ENCODE measurements at regions of chr19 and their contacts with region 1.

Region 1: GRCh38 chr19:16185123-16185767 is at the start of gene FAM32A:
- DNase-seq: peak; percentile 98
- ATAC-seq: peak; percentile 97
- H3K4me3 ChIP-seq: peak within 1 kb of the TSS; percentile 84 to 96 (median 95)
- H3K27ac ChIP-seq: peak within 1 kb of the TSS; percentile 73
- H3K4me1 ChIP-seq: peaks cover 26% of the 10 kb centered on the region
- H3K27me3 ChIP-seq: no peaks in the 10 kb centered on the region; a peak in 1 of 5 replicates
- CTCF ChIP-seq: peak; percentile 37; the same call in 1 of the 2 replicates
- EP300 ChIP-seq: no peak
- POLR2A ChIP-seq: peak; percentile 79 to 95
- RAD21 ChIP-seq: 0 out of 2 replicates have a peak, but pooled peaks have one; percentile 10
- total RNA-seq, gene FAM32A: 86.2 and 107 TPM in 2 replicates

Region 2: DNA sequence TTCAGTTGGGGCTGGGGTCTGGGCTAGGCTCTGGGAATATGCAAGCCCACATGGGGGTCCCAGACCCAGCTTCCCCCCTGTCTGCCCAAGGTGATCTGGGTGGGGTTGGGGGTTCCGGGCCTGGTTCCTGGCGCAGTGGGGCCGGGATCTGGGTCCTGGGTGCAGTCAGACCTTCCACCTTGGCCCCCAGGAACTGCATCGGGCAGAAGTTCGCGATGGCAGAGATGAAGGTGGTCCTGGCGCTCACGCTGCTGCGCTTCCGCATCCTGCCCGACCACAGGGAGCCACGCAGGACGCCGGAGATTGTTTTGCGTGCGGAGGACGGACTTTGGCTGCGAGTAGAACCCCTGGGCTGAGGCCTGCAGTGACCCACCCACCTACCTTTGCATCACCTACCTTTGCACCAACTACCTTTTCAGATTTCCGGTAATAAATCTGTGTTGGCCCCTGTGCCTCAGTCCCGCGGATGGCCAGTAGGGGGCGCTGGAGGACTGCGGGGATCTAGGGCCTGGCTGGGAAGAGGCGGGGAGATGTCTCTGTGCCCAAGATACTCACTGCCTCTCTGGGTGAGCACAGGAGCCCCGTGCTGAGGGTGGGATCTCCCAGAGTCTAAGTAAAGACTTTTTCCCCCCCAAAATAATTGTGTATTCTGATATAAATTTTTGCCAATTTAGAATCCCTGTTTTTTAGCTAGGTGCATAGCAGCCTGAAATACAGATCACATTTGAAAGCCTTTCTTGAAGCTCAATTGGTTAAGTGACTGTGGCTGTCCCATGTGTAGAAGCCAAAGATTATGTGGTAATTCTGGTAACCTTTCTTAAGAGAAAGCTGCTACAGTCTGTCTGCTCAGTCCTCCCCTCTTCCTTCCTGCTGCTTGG is 556.0 kb before region 1 on chr19:
- CTCF ChIA-PET with region 1: interaction called, 4 read pairs
- POLR2A ChIA-PET with region 1: no interaction called
- in situ Hi-C with region 1: no loop called
- intact Hi-C with region 1: loop called (anchors 10 kb)
- DNase-seq: peak; percentile 55
- ATAC-seq: peak; percentile 95
- H3K4me3 ChIP-seq: no peak overlapping the region
- H3K27ac ChIP-seq: no peak overlapping the region
- H3K4me1 ChIP-seq: peaks cover 7% of the 10 kb centered on the region; the same call in 1 of the 2 replicates
- H3K27me3 ChIP-seq: no peaks in the 10 kb centered on the region
- CTCF ChIP-seq: peak; percentile 94
- EP300 ChIP-seq: no peak
- POLR2A ChIP-seq: no peak
- RAD21 ChIP-seq: peak; percentile 94

Region 3: GRCh38 chr19:16041299-16041990 is 143.8 kb before region 1 on chr19:
- CTCF ChIA-PET with region 1: interaction called, 40 read pairs
- POLR2A ChIA-PET with region 1: interaction called, 9 read pairs
- in situ Hi-C with region 1: loop called (anchors 5 kb)
- intact Hi-C with region 1: loop called (anchors 1 kb)
- DNase-seq: peak; percentile 52
- ATAC-seq: peak; percentile 86
- H3K4me3 ChIP-seq: 0 out of 6 replicates have a peak overlapping the region, but pooled peaks of 1 of the 3 experiments have one; percentile 17
- H3K27ac ChIP-seq: no peak overlapping the region
- H3K4me1 ChIP-seq: peaks cover 17% of the 10 kb centered on the region
- H3K27me3 ChIP-seq: peaks cover 0 to 9% of the 10 kb centered on the region in 2 experiments; a peak in 3 of 5 replicates
- CTCF ChIP-seq: peak; percentile 95
- EP300 ChIP-seq: no peak
- POLR2A ChIP-seq: no peak
- RAD21 ChIP-seq: peak; percentile 90

Region 4: GRCh38 chr19:16111160-16111908 is 73.9 kb before region 1 on chr19 and contains the start of gene RAB8A:
- CTCF ChIA-PET with region 1: no interaction called
- POLR2A ChIA-PET with region 1: interaction called, 5 read pairs
- in situ Hi-C with region 1: no loop called
- intact Hi-C with region 1: loop called (anchors 2 kb)
- DNase-seq: peak; percentile 97
- ATAC-seq: peak; percentile 96
- H3K4me3 ChIP-seq: peak within 1 kb of the TSS; percentile 94 to 95 (median 95)
- H3K27ac ChIP-seq: peak within 1 kb of the TSS; percentile 77
- H3K4me1 ChIP-seq: peaks cover 47% of the 10 kb centered on the region
- H3K27me3 ChIP-seq: no peaks in the 10 kb centered on the region; a peak in 1 of 5 replicates
- CTCF ChIP-seq: peak; percentile 94
- EP300 ChIP-seq: no peak
- POLR2A ChIP-seq: peak; percentile 34 to 54; a peak in 2 of 4 replicates
- RAD21 ChIP-seq: peak; percentile 97
- total RNA-seq, gene RAB8A: 44.8 and 45.0 TPM in 2 replicates

Region 5: DNA sequence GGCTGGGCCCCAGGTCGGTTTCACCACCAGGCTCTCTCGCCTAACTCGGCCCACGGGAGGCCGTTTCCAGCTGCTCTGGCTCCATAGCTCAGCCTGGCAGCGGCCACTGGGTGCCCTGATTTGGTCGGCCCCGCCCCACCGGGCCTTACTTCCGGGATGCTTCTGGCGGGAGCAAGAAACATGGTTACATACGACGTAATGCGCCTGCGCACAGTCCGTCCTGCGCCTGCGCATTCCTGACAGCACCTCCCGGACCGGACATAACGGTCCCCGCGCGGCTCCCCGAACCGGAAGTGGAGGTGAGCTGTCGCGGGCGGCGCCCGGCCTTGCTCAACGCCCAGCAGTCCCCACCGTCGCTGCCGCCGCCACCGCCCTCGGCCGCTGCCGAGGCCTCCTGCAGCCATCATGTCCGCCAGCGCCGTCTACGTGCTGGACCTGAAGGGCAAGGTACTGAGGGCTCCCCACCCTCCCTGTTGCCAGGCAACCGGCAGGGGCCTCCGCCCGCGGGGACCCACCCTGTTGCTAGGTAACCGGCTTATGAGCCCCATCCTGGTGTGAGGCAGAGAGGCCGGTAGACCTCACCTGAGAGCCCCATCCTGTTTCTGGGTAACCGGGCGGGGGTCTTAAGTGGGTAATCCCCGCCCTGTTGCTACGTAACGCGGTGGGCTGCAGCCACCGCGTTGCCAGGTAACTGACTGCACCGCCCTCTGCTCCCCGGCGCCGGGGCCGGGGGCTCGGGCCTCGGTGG is 12.6 kb after region 1 on chr19 and contains the start of gene AP1M1:
- CTCF ChIA-PET with region 1: no interaction called
- POLR2A ChIA-PET with region 1: interaction called, 44 read pairs
- in situ Hi-C with region 1: no loop called
- intact Hi-C with region 1: loop called (anchors 1 kb)
- DNase-seq: peak; percentile 95
- ATAC-seq: peak; percentile 84
- H3K4me3 ChIP-seq: peak within 1 kb of the TSS; percentile 62 to 87 (median 80)
- H3K27ac ChIP-seq: peak within 1 kb of the TSS; percentile 82
- H3K4me1 ChIP-seq: peaks cover 52% of the 10 kb centered on the region
- H3K27me3 ChIP-seq: no peaks in the 10 kb centered on the region; a peak in 1 of 5 replicates
- CTCF ChIP-seq: no peak
- EP300 ChIP-seq: no peak
- POLR2A ChIP-seq: peak; percentile 71
- RAD21 ChIP-seq: no peak; the same call in 1 of the 2 replicates
- total RNA-seq, gene AP1M1: 43.6 and 46.1 TPM in 2 replicates

Measured in HepG2 (cell line).